Activated CD4-positive, alpha-beta T cell treated with anti-CD3 and anti-CD28 coated beads, Interleukin-2, amount 10 ng/mL, durations not matched to agents 7 days and 5 days (primary cell): ENCODE measurements at regions of chr9 and their contacts with region 1.

Region 1: GRCh38 chr9:114108016-114108833 is 9.1 kb upstream of the KIF12 start:
- DNase-seq: peak; percentile 60
- H3K4me3 Mint-ChIP-seq: no peak overlapping the region
- H3K27ac Mint-ChIP-seq: no peak overlapping the region
- H3K4me1 Mint-ChIP-seq: no peaks in the 10 kb centered on the region
- H3K27me3 Mint-ChIP-seq: peaks cover 21% of the 10 kb centered on the region

Region 2: GRCh38 chr9:113906411-113907110 is 201.7 kb before region 1 on chr9:
- CTCF ChIA-PET with region 1: no interaction called
- POLR2A ChIA-PET with region 1: no interaction called
- DNase-seq: no peak
- H3K4me3 Mint-ChIP-seq: no peak overlapping the region
- H3K27ac Mint-ChIP-seq: no peak overlapping the region
- H3K4me1 Mint-ChIP-seq: no peaks in the 10 kb centered on the region
- H3K27me3 Mint-ChIP-seq: peaks cover 16% of the 10 kb centered on the region

Region 3: DNA sequence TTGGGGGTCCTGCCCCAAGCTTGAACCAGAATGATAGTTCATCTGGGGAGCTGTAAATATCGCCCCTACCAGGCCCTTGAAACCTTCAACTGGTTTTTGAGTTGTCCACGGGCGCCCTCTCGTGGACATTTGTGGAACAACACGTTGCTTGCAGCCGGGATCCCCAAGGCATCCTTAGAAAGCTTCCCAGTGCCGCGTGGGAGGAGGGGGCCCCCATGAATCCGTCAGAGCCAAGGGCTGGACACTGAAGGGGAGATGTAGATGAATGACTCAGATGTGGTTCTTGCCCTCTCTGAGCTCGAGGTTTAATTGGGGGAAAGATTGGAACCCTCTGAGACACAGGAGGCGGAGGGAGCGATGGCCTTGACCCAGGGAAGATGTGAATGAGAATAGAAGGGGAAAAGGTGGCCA is 182.8 kb after region 1 on chr9:
- CTCF ChIA-PET with region 1: interaction called, 18 read pairs
- POLR2A ChIA-PET with region 1: no interaction called
- DNase-seq: peak; percentile 71
- H3K4me3 Mint-ChIP-seq: no peak overlapping the region
- H3K27ac Mint-ChIP-seq: peak overlapping the region; percentile 57
- H3K4me1 Mint-ChIP-seq: peaks cover 4% of the 10 kb centered on the region
- H3K27me3 Mint-ChIP-seq: no peaks in the 10 kb centered on the region